WTC11 (cell line): ENCODE measurements at regions of chr11 and their contacts with region 1.

Region 1: DNA sequence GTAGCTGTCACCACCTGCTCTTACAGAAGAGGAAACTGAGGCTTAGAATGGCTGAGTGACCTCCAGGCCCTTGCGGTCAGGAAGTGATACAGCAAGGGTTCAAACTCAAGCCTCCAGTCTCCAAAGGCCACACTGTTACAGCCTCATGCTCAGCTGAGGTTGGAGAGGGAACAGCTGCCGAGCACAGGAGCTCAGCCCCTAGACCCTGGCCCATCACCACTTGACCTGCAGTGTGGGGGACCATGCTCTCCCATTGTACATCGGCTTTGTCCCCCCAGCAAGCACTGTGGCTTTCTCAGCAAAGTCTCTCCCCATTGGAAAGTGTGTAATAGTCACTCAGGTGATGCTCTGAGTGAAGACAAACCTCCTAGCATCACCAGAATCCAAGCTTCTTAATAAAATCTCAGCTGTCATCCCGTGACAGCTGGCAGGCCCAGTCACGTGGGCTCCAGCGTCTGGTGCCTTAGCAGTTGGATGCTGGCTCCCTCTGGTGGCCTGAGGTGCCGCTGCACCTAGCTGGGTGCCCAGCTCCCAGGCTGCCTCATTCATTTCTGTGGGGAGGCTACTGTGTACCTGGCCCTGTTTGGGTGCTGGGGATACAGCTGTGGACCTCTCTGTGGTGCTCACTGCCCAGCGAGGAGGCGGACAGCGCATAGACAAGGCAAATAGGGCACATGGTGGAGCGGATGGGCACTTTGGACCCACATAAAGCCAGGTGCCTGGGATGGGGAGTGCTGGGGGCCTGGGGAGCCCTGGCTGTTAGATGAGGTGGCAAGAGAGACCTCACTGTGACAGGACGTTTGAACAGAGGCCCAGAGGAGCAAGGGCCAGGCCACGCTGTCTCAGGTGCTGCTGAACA is 19.1 kb upstream of the MYRF start:
- DNase-seq: peak; percentile 85
- ATAC-seq: peak; percentile 66
- H3K4me3 Mint-ChIP-seq: no peak overlapping the region
- H3K27ac Mint-ChIP-seq: peak overlapping the region; percentile 39; the same call in 1 of the 2 replicates
- H3K4me1 Mint-ChIP-seq: peaks cover 2% of the 10 kb centered on the region; the same call in 1 of the 2 replicates
- H3K27me3 Mint-ChIP-seq: no peaks in the 10 kb centered on the region
- CTCF ChIP-seq: peak; percentile 89

Region 2: GRCh38 chr11:61587521-61588453 is 145.6 kb before region 1 on chr11:
- CTCF ChIA-PET with region 1: interaction called, 19 read pairs
- POLR2A ChIA-PET with region 1: no interaction called
- DNase-seq: peak; percentile 96
- ATAC-seq: peak; percentile 80
- H3K4me3 Mint-ChIP-seq: peak overlapping the region; percentile 74
- H3K27ac Mint-ChIP-seq: no peak overlapping the region
- H3K4me1 Mint-ChIP-seq: peaks cover 34% of the 10 kb centered on the region
- H3K27me3 Mint-ChIP-seq: peaks cover 59% of the 10 kb centered on the region
- CTCF ChIP-seq: no peak

Region 3: DNA sequence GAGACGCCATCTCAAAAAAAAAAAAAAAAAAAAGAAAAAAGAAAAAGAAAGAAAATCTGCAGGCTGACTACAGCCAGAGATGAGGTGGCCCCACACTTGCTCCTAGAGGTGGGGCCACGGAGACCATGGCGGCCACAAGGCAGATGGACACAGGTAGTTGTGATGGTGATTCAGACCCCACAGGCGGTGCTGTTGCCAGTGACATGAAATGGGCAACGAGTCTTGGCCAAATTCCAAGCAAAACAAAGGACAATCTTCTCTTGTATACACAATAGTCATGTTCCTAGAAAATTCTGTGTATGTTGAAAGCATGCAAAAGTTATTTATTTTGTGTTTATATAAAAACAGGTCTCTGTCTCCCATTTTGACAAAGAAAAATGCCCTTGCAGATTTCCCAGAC is 75.8 kb before region 1 on chr11:
- CTCF ChIA-PET with region 1: interaction called, 13 read pairs
- POLR2A ChIA-PET with region 1: no interaction called
- DNase-seq: no peak
- ATAC-seq: no peak
- H3K4me3 Mint-ChIP-seq: no peak overlapping the region
- H3K27ac Mint-ChIP-seq: no peak overlapping the region
- H3K4me1 Mint-ChIP-seq: peaks cover 44% of the 10 kb centered on the region
- H3K27me3 Mint-ChIP-seq: no peaks in the 10 kb centered on the region; the same call in none of the 2 replicates
- CTCF ChIP-seq: no peak

Region 4: GRCh38 chr11:61688365-61689163 is 44.8 kb before region 1 on chr11:
- CTCF ChIA-PET with region 1: interaction called, 26 read pairs
- POLR2A ChIA-PET with region 1: no interaction called
- DNase-seq: no peak
- ATAC-seq: no peak
- H3K4me3 Mint-ChIP-seq: no peak overlapping the region
- H3K27ac Mint-ChIP-seq: no peak overlapping the region
- H3K4me1 Mint-ChIP-seq: peaks cover 21% of the 10 kb centered on the region
- H3K27me3 Mint-ChIP-seq: no peaks in the 10 kb centered on the region
- CTCF ChIP-seq: no peak

Region 5: DNA sequence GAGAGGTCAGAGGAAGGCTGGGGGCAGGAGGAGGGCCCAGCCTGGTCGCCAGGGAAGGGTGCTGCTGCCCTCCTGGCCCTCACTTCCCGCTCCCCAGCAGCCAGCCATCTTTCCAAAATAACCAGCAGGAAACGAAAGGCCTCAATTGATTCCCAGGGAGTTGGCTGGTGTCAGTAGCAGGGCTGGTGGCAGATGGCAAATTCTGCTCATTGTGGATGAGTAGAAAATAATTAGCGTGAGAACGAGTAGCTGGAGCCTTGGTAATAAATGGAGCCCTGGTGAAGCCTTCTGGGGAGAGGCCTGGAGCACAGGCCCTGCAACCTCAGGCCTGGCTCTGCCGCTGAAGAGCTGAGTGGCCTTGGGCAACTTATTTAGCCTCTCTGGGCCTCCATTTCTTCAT is 21.9 kb before region 1 on chr11:
- CTCF ChIA-PET with region 1: interaction called, 71 read pairs
- POLR2A ChIA-PET with region 1: no interaction called
- DNase-seq: no peak
- ATAC-seq: no peak
- H3K4me3 Mint-ChIP-seq: no peak overlapping the region
- H3K27ac Mint-ChIP-seq: no peak overlapping the region
- H3K4me1 Mint-ChIP-seq: peaks cover 20% of the 10 kb centered on the region
- H3K27me3 Mint-ChIP-seq: peaks cover 3% of the 10 kb centered on the region; the same call in 1 of the 2 replicates
- CTCF ChIP-seq: no peak

Region 6: GRCh38 chr11:61792310-61793085 is 59.1 kb after region 1 on chr11 and contains the starts of genes FEN1 and TMEM258:
- CTCF ChIA-PET with region 1: interaction called, 24 read pairs
- POLR2A ChIA-PET with region 1: no interaction called
- DNase-seq: peak; percentile 88
- ATAC-seq: peak; percentile 77
- H3K4me3 Mint-ChIP-seq: peak within 1 kb of the TSS; percentile 94
- H3K27ac Mint-ChIP-seq: peak within 1 kb of the TSS; percentile 100
- H3K4me1 Mint-ChIP-seq: peaks cover 21% of the 10 kb centered on the region
- H3K27me3 Mint-ChIP-seq: no peaks in the 10 kb centered on the region; the same call in 1 of the 2 replicates
- CTCF ChIP-seq: no peak
- total RNA-seq, gene FEN1: 72.3 to 96.3 TPM (median 73.2 TPM) in 3 replicates
- total RNA-seq, gene TMEM258: 175 to 192 TPM (median 190 TPM) in 3 replicates

Region 7: DNA sequence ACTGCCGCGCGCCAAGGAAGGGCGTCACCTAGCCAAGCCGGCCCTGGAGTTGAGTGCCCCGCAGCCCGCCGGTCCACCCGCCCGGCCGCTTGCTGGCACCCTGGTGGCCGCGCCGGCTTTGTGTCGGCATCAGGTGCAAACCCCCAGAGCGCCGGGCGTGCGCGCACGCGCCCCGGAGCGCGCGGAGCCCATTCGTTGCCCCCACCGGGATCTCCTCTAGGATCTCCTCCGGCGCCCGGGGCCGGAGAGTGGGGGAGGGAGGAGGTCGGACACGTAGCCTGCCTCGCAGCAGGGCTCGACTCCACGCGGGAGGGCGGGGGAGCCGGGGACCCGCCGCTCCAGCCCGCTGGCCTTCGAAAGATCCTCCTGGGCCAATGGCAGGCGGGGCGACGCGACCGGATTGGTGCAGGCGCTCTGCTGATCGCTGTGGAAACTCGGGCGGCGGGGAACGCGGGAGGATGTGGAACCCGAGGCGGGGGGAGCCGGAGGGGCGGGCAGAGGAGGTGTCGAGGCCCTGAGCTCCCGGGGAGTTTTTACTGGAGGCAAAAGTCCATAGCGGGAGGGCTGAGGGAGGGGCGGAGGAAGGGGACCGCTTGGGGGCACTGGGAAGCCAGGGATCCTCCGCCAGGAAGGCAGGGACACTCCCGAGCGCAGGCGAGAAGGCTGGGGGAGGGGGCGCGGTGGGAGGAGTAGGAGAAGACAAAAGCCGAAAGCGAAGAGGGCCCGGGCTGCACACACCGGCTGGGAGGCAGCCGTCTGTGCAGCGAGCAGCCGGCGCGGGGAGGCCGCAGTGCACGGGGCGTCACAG is 94.4 kb after region 1 on chr11 and contains the start of gene FADS2:
- CTCF ChIA-PET with region 1: no interaction called
- POLR2A ChIA-PET with region 1: no interaction called
- DNase-seq: peak; percentile 89
- ATAC-seq: peak; percentile 70
- H3K4me3 Mint-ChIP-seq: peak within 1 kb of the TSS; percentile 85
- H3K27ac Mint-ChIP-seq: peak within 1 kb of the TSS; percentile 97
- H3K4me1 Mint-ChIP-seq: peaks cover 48% of the 10 kb centered on the region
- H3K27me3 Mint-ChIP-seq: no peaks in the 10 kb centered on the region
- CTCF ChIP-seq: no peak
- total RNA-seq, gene FADS2: 416 to 423 TPM (median 422 TPM) in 3 replicates

Region 8: GRCh38 chr11:61841636-61842527 is 108.5 kb after region 1 on chr11:
- CTCF ChIA-PET with region 1: no interaction called
- POLR2A ChIA-PET with region 1: no interaction called
- DNase-seq: no peak
- ATAC-seq: no peak
- H3K4me3 Mint-ChIP-seq: no peak overlapping the region
- H3K27ac Mint-ChIP-seq: no peak overlapping the region; the same call in 1 of the 2 replicates
- H3K4me1 Mint-ChIP-seq: peaks cover 6% of the 10 kb centered on the region
- H3K27me3 Mint-ChIP-seq: no peaks in the 10 kb centered on the region
- CTCF ChIP-seq: no peak